K562 (cell line): ENCODE measurements at regions of chr18 and their contacts with region 1.

Region 1: DNA sequence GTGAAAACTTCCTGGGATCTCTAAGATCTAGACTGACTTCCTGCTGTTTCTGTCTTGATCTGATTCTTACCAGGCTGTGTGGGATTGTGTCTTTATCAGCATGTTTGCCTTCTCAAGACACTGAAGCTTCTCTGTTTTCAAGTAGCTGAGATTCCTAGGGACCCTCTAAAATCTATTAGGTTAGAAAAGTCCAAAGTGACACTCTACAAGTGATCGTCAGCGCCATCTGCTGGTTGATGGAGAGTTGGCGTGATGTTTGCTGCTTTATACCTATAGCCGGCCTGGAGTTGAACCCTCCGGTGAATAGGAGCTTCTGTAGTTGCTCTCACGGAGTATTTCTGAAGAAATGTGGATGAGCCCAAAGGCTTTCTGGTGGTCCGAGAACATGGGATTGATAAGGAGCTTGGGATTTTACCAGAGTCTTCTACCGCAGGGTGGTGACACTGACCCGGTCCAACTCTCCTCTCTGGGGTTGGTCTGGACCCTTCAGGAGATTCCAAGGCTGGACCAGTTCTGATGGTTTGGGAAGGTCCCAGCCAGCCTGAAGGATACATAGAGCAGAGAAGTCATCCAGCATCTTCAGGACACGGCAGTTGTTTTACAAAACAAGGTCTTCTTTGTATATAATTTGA is 96.0 kb upstream of the TTC39C start:
- DNase-seq: peak; percentile 53 to 68 (median 53)
- ATAC-seq: peak; percentile 90
- H3K4me3 ChIP-seq: no peak overlapping the region
- H3K27ac ChIP-seq: no peak overlapping the region
- H3K4me1 ChIP-seq: no peaks in the 10 kb centered on the region
- H3K27me3 ChIP-seq: peaks cover 0 to 9% of the 10 kb centered on the region in 2 experiments; a peak in 2 of 5 replicates
- CTCF ChIP-seq: peak; percentile 59 to 74 (median 65)
- EP300 ChIP-seq: no peak
- POLR2A ChIP-seq: no peak
- RAD21 ChIP-seq: peak in 1 of 2 experiments; percentile 50; a peak in 2 of 4 replicates

Region 2: DNA sequence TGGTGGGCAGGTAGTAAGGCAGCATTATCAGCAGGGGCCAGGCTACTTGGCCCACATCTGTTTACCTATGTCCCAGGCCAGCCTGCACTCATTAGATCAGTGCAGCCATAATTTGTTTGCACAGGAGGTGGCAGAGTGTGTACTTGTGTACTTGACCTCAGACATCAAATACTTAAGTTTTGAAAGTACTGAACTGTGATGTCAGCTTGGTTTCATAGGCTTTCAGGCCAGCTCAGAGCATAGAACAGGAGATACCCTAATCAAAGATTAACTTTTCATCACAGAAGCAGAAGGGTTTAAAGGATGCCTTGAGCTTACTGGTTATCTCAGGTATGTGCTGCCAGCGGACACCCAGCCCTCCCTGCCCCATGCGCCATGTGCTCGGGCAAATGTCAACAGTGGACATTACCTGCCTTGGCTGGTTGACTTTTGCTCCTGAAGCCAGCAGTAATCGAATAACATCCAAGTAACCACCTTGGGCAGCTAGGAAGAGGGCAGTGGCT is 289.0 kb before region 1 on chr18:
- CTCF ChIA-PET with region 1: no interaction called
- POLR2A ChIA-PET with region 1: no interaction called
- in situ Hi-C with region 1: no loop called
- intact Hi-C with region 1: loop called (anchors 10 kb)
- DNase-seq: no peak
- ATAC-seq: peak; percentile 45
- H3K4me3 ChIP-seq: no peak overlapping the region
- H3K27ac ChIP-seq: no peak overlapping the region
- H3K4me1 ChIP-seq: no peaks in the 10 kb centered on the region; a peak in 2 of 5 replicates
- H3K27me3 ChIP-seq: peaks cover 0 to 10% of the 10 kb centered on the region in 2 experiments; a peak in 2 of 5 replicates
- CTCF ChIP-seq: no peak
- EP300 ChIP-seq: no peak
- POLR2A ChIP-seq: no peak
- RAD21 ChIP-seq: no peak